ENCODE measurements at regions of chr5 and their contacts with region 1.

Region 1: GRCh38 chr5:82549263-82549662 is 271.1 kb upstream of the RPS23 start:
- DNase-seq: no peak
- H3K4me3 ChIP-seq: no peak overlapping the region
- H3K27ac ChIP-seq: no peak overlapping the region
- H3K4me1 ChIP-seq: no peaks in the 10 kb centered on the region
- H3K27me3 ChIP-seq: no peaks in the 10 kb centered on the region
- CTCF ChIP-seq: no peak
- POLR2A ChIP-seq: no peak

Region 2: GRCh38 chr5:81639556-81639955 is 909.7 kb before region 1 on chr5:
- intact Hi-C with region 1: no loop called
- DNase-seq: no peak
- H3K4me3 ChIP-seq: no peak overlapping the region
- H3K27ac ChIP-seq: no peak overlapping the region
- H3K4me1 ChIP-seq: peaks cover 4 to 8% of the 10 kb centered on the region in 2 donors
- H3K27me3 ChIP-seq: no peaks in the 10 kb centered on the region
- CTCF ChIP-seq: no peak
- POLR2A ChIP-seq: no peak

Region 3: DNA sequence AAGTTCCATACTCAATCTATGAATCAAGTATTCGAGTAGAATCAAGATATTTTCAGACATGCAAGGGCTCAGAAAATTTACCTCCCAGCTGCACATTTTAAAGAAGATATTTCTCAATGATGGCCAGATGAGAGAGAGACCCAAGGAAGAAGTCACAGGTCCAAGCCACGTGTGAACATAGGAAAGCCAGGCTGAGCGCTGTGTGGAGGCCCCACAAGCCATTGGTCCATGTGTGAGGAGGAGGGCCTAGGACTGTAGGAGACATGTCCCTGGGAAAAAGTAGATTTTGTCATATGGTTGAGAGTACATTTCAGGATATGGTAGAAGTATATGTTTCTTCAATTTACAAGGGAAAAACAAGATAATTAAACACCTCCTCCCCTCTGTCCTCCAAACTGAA is 155.3 kb before region 1 on chr5:
- intact Hi-C with region 1: loop called (anchors 5 kb)
- DNase-seq: no peak
- H3K4me3 ChIP-seq: no peak overlapping the region
- H3K27ac ChIP-seq: no peak overlapping the region
- H3K4me1 ChIP-seq: no peaks in the 10 kb centered on the region
- H3K27me3 ChIP-seq: no peaks in the 10 kb centered on the region
- CTCF ChIP-seq: no peak
- POLR2A ChIP-seq: no peak

Region 4: GRCh38 chr5:82707741-82708140 is 158.5 kb after region 1 on chr5:
- intact Hi-C with region 1: no loop called
- DNase-seq: no peak
- H3K4me3 ChIP-seq: no peak overlapping the region
- H3K27ac ChIP-seq: no peak overlapping the region
- H3K4me1 ChIP-seq: no peaks in the 10 kb centered on the region
- H3K27me3 ChIP-seq: no peaks in the 10 kb centered on the region
- CTCF ChIP-seq: no peak
- POLR2A ChIP-seq: no peak